ENCODE measurements at regions of chr7 and their contacts with region 1.

Region 1: DNA sequence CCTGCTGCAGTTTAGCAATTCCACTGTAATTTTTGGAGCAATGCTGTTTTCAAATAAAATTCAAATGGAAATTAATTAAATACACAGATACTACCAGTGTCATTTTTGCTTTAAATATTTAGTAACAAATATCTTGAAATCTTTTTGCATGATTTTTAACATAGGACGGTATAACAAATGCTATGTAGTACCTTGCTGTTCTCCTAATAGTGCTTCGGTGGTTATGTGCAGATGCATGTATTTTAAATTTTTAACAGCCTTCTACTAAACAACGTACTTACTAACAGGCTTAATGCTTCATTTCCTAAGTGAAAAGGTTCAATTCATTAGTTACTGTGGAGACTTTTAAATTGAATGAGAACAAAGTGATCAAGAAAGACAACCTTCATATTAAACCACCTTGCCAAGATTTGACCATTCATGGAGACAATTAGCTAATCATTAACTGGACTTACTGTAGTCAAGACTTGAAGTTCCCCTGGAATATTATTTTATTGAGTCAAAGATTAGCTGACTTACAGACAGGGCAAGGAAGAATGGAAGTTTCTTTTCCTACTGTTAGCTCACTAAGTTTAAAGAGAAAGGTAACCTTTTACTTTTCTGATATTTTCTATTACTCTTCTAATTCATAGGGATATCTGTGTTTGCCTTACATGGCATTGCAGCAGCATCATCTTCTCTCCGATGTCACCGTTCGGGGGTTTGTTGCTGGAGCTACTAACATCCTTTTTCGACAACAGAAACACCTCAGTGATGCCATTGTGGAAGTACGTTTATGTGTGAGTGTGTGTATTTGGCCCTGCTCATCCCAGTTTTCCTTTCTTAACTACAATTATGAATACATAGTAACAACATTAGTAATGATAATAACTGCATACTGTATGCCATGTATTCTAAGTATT is 74.3 kb downstream of the AVL9 start:
- DNase-seq: no peak

Region 2: DNA sequence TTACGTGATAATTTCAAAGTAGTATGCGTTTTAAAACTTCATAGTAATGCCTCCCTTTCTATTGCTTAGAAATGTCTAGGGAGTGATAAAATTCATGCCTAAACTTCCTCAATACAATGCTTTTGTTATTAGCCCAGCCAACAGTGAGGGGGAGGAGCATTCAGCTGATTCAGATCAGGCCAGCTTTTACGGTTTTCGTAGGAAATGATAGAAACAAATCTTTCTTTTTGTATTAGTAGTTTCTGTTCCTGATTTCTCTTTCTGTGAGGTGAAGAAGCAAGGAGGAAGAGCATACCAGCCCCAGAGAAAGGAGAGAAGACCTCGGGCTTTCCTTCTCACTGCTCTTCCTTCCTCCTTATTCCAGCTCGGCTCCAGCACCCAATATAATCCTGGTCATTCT is 1090.9 kb before region 1 on chr7:
- intact Hi-C with region 1: loop called in 1 of 2 experiments (anchors 5 kb)
- DNase-seq: no peak

Region 3: GRCh38 chr7:32479574-32480200 is 90.0 kb before region 1 on chr7:
- intact Hi-C with region 1: no loop called
- DNase-seq: no peak

Region 4: DNA sequence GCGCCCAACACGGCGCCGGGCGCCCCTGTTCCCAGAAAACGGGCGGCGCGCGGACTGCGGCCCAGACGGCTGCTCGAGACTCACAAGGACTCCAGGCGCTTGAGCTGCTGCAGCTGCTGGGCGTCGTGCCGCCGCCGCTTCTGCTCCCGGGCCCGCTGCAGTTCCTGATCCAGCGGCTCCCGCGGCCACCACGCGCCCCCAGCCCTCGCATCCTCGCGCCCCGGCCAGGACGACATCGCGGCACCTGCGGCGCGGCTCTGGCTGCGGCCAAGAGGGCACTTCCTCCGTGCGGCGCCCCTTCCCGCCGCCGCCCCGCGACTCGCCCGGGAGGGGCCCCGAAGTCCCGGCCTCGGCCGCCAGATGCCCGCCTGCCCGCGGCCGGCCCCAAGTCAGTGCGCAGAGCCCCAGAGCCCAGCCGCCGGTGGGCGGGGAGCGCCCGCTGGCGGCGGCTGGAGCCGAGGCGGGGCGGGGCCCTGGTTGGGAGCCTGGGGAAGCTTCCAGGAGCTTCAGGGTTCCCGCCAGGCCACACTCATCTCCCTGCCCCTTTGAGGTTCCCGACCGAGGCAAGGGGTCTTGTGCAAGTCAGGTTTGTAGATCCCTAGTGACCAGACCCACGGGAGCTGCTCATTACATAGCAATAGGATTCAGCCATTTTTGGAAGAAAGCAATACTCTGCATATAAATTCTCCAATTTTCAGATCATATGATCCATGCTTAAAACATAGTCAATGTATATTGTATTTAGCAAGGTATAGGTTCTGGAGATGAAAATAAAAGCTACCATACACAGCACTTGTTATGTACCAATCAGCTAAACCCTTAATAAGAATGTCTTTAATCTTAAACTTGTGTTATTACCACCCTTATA is 373.4 kb after region 1 on chr7:
- intact Hi-C with region 1: no loop called
- DNase-seq: peak; percentile 92

Measured in posterior vena cava (tissue), 2 donors.